ENCODE measurements at regions of chr12 and their contacts with region 1.

Region 1: DNA sequence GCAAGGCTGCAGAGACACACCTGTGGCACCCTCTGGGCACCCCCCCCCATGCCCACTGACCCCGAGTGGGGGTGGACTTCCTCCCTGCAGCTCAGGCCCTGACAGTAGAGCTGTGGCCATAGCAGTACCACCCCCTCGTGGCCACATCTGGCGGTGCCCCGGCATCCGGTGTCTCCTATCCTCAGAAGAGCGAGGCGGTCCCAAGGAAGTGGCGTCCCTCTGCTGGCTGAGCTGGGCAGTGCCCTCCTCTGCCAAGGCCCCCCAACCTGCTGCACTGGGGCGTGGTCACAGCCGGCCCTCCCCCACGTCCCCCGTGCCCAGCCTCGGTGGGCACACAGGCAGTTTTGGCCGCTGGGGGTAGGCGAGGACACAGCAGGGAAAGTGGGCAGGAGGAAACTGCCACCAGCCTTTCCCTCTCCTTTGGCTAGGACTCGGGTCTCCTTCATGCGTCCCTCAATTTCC is 6.0 kb upstream of the SLC6A12 start:
- DNase-seq: peak; percentile 72 to 98
- H3K4me3 ChIP-seq: peak overlapping the region in 2 of 4 experiments; percentile 14 to 40; a peak in 2 of 8 replicates
- H3K27ac ChIP-seq: no peak overlapping the region
- H3K4me1 ChIP-seq: peaks cover 0 to 11% (median 9%) of the 10 kb centered on the region in 4 experiments; a peak in 6 of 7 replicates
- H3K27me3 ChIP-seq: peaks cover 0 to under 1% (median 0%) of the 10 kb centered on the region in 4 experiments; a peak in 1 of 7 replicates
- CTCF ChIP-seq: peak in 2 of 3 experiments; percentile 99; a peak in 3 of 4 replicates
- EP300 ChIP-seq: no peak
- POLR2A ChIP-seq: no peak
- RAD21 ChIP-seq: peak; percentile 90 to 94

Region 2: GRCh38 chr12:143964-144649 is 75.8 kb before region 1 on chr12:
- CTCF ChIA-PET with region 1: interaction called, 31 read pairs
- POLR2A ChIA-PET with region 1: no interaction called
- DNase-seq: no peak
- H3K4me3 ChIP-seq: no peak overlapping the region
- H3K27ac ChIP-seq: no peak overlapping the region
- H3K4me1 ChIP-seq: peaks cover 4 to 38% (median 24%) of the 10 kb centered on the region in 4 experiments
- H3K27me3 ChIP-seq: peaks cover 0 to 23% (median 14%) of the 10 kb centered on the region in 4 experiments; a peak in 5 of 7 replicates
- CTCF ChIP-seq: no peak
- EP300 ChIP-seq: no peak
- POLR2A ChIP-seq: no peak
- RAD21 ChIP-seq: no peak; a peak in 1 of 4 replicates

Region 3: DNA sequence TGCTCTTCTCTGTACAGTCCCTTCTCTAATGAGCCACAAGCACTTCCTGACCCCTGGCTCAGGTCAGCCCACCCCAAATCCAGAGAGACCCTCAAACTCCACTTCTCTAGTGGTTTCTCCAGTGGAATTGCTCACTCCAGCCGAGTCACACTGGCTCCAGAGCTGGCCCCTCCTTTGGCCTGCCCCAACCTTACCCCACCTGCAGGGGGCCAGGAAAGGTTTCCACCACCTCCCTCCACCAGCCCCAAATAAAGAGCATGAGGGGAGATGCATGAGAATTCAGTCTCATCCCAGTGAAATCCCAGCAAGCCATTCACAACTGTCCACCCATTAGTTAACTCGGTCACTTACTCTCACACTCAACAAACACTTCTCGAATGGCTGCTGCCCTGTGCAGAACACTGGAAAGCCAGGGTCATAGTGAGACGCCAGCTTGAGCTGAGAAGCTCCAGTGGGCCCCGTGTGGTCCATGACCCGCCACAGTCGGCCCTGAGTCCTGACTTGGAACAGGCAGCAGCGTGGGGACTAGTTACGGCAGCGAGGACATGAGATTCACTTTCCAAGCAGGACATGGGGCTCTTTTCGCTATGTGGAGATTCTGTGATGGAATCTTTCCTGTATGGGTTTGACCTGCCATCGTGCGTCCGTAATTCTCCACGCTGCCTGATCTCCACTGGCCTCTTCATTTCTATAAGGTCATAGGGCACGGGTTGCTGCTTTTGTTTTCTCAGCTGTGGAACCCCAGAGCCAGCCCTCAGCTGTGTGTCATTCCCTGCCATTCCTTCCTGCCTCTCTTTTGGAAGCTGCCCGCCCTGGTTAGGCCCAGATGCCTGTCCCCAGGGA is 50.2 kb before region 1 on chr12:
- CTCF ChIA-PET with region 1: interaction called, 55 read pairs
- POLR2A ChIA-PET with region 1: interaction called, 3 read pairs
- DNase-seq: no peak
- H3K4me3 ChIP-seq: no peak overlapping the region
- H3K27ac ChIP-seq: no peak overlapping the region
- H3K4me1 ChIP-seq: peaks cover 3 to 28% (median 20%) of the 10 kb centered on the region in 4 experiments
- H3K27me3 ChIP-seq: peaks cover 0 to 3% (median 2%) of the 10 kb centered on the region in 4 experiments; a peak in 2 of 7 replicates
- CTCF ChIP-seq: no peak
- EP300 ChIP-seq: no peak
- POLR2A ChIP-seq: no peak
- RAD21 ChIP-seq: peak in 1 of 2 experiments; percentile 20; a peak in 1 of 4 replicates

Region 4: DNA sequence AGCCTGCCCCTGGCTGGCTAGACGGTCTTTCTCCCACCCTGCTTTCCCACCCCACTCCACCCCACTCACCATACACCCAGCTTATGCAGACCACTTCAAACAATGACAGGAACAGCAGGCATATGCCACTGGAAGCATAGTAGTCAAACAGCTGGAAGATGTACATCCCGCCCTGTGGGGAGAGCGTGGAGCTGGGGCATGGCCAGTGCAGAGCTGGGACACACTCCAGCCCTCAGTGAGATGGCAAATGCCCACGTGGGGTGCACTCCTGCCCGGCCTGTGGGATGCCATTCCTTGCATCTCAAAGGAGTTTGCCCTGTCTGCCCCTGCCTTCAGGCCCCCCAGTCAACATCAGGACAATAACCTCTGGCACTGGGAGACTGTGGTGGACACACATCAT is 24.8 kb before region 1 on chr12:
- CTCF ChIA-PET with region 1: interaction called, 74 read pairs
- POLR2A ChIA-PET with region 1: interaction called, 3 read pairs
- DNase-seq: no peak
- H3K4me3 ChIP-seq: no peak overlapping the region
- H3K27ac ChIP-seq: no peak overlapping the region
- H3K4me1 ChIP-seq: no peaks in the 10 kb centered on the region; a peak in 1 of 7 replicates
- H3K27me3 ChIP-seq: peaks cover 0 to 4% (median 1%) of the 10 kb centered on the region in 4 experiments; a peak in 2 of 7 replicates
- CTCF ChIP-seq: no peak
- EP300 ChIP-seq: no peak
- POLR2A ChIP-seq: no peak
- RAD21 ChIP-seq: no peak

Region 5: GRCh38 chr12:238736-239398 is 18.9 kb after region 1 on chr12:
- CTCF ChIA-PET with region 1: interaction called, 101 read pairs
- POLR2A ChIA-PET with region 1: no interaction called
- DNase-seq: no peak
- H3K4me3 ChIP-seq: no peak overlapping the region
- H3K27ac ChIP-seq: no peak overlapping the region
- H3K4me1 ChIP-seq: no peaks in the 10 kb centered on the region
- H3K27me3 ChIP-seq: no peaks in the 10 kb centered on the region
- CTCF ChIP-seq: no peak
- EP300 ChIP-seq: no peak
- POLR2A ChIP-seq: no peak
- RAD21 ChIP-seq: no peak

Measured in H1 (cell line).